ENCODE measurements at regions of chr18 and their contacts with region 1.

Region 1: GRCh38 chr18:76699923-76700322 is 122.4 kb upstream of the ZNF236 start:
- DNase-seq: no peak
- H3K4me3 Mint-ChIP-seq: no peak overlapping the region
- H3K27ac Mint-ChIP-seq: no peak overlapping the region
- H3K4me1 Mint-ChIP-seq: no peaks in the 10 kb centered on the region
- H3K27me3 Mint-ChIP-seq: peaks cover 26% of the 10 kb centered on the region
- CTCF ChIP-seq: no peak

Region 2: DNA sequence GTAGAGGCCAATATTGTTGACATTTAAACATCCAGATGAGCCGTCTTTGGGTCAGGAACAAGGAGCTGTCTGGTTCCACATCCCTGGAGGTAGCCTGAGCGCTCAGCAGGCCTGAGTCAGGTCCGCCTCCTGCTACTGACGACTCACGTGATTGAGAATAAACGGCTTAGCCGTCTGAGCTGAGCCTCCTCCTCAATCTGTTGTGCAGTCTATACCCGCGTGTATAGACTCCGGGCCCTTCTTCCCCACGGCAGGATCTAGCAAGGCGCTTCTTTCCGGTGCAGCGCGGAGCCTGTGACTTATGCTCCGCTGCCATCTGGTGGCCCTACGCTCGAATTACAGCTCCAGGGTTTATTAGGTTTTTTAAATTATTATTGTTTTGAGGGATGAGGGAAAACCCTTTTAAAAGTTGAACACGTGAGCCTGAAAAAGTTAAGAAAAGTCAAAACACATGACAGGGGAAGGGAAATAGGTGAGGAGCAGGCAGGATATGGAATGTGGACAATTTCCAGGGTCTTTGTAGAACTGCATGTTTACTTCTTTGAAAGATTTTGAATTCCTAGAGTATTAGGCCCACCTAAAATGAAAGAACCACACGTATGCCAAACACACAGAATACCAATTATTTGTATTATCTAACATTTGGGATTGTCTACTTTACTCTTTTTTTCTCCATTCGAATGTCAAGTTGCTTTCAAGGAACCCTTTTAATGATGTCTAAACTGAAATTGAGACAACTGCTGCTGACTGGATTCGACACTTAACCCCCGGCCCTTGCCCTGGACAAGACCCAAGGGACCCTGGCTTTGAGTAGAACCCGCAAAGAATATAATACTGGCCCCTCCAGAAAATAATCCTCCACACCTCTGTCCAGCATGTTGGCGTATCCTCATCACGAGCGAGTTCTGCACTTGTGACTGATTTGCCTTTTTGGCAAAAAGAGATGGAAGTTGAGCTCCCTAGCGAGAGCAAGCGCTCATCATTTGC is 10.0 kb after region 1 on chr18:
- CTCF ChIA-PET with region 1: interaction called, 17 read pairs
- POLR2A ChIA-PET with region 1: interaction called, 3 read pairs
- intact Hi-C with region 1: no loop called
- DNase-seq: peak; percentile 70
- H3K4me3 Mint-ChIP-seq: no peak overlapping the region
- H3K27ac Mint-ChIP-seq: no peak overlapping the region
- H3K4me1 Mint-ChIP-seq: no peaks in the 10 kb centered on the region
- H3K27me3 Mint-ChIP-seq: no peaks in the 10 kb centered on the region
- CTCF ChIP-seq: peak; percentile 91

Region 3: DNA sequence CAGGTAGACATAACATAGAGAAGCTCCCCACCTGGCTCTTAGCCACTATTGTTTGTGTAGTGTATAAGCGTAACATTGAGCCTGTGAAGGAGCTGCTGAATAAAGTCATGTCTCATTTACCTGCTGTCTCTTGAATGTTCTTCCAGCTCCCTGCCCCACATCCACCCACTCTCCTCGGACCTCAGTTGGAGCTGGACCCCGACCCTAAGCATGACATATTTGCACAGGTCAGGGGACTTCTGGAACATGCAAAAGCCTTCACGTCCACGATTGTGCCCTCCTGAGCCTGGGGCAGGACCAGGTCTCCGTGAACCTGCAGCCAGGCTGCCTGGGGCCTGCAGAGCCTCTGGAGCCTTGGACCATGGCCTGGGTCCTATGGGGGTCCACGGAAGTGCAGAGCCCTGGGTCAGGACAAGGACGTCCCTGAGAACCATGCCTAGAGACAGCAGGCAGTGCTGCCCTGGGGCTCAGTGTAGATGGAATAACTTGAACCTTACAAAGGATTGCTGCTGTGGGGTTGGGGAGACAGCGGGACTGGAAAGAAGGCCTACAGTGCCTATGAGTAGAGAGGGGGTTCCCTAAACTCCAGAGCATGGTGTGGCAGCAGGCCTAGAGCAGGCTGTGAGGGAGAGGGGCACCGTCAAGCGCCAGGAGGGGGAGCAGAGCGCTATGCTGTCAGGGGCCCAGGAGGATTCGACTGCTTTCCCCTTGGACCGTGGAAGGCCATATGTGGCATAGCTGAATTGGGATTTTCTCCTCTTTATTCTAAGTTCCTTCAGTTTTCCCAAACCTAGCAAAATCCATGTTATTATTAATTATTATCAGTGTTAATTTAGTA is 22.5 kb after region 1 on chr18:
- CTCF ChIA-PET with region 1: no interaction called
- POLR2A ChIA-PET with region 1: no interaction called
- intact Hi-C with region 1: no loop called
- DNase-seq: no peak
- H3K4me3 Mint-ChIP-seq: no peak overlapping the region
- H3K27ac Mint-ChIP-seq: no peak overlapping the region
- H3K4me1 Mint-ChIP-seq: no peaks in the 10 kb centered on the region
- H3K27me3 Mint-ChIP-seq: no peaks in the 10 kb centered on the region
- CTCF ChIP-seq: no peak